ENCODE measurements at regions of chr11 and their contacts with region 1.

Region 1: DNA sequence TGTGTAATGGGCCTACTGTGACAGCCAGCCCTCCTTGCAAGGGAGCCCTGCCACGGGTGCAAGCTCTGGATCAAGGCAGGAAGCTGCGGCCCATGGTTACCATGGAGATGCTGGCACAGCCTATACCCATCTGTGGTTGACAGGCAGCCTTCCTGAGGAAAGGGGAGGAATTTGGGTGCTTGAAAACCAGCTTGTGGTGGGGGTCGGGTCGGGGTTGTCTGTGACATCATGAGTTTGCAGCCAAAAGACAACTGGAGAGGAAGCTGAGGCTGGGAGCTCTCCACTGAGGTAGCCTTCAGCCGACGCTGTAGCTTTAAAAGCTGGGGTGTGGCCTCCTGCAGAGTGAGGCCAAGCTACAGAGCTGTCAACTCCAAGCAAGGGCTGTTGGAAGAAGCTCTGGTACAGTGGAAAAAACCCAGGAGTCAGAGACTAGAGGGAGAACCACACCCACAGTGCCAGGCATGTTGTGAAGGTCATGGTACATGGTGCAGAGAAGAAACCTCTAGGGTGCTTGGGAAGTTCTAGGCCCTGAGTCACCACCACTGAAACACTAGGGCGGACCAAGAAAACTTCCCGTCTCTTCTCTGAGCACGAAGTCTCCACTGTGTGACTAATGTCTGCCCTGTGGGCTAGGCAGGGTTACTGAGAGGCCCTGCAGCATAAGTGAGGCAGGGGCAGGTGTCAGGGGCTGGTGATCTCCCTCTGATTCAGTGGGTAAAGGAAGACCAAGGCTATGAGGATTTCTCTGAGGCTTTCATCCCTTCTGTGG is 10.8 kb upstream of the LDHA start:
- DNase-seq: peak; percentile 53
- H3K4me3 Mint-ChIP-seq: peak overlapping the region; percentile 59
- H3K27ac Mint-ChIP-seq: peak overlapping the region; percentile 99
- H3K4me1 Mint-ChIP-seq: peaks cover 38% of the 10 kb centered on the region
- H3K27me3 Mint-ChIP-seq: no peaks in the 10 kb centered on the region

Region 2: DNA sequence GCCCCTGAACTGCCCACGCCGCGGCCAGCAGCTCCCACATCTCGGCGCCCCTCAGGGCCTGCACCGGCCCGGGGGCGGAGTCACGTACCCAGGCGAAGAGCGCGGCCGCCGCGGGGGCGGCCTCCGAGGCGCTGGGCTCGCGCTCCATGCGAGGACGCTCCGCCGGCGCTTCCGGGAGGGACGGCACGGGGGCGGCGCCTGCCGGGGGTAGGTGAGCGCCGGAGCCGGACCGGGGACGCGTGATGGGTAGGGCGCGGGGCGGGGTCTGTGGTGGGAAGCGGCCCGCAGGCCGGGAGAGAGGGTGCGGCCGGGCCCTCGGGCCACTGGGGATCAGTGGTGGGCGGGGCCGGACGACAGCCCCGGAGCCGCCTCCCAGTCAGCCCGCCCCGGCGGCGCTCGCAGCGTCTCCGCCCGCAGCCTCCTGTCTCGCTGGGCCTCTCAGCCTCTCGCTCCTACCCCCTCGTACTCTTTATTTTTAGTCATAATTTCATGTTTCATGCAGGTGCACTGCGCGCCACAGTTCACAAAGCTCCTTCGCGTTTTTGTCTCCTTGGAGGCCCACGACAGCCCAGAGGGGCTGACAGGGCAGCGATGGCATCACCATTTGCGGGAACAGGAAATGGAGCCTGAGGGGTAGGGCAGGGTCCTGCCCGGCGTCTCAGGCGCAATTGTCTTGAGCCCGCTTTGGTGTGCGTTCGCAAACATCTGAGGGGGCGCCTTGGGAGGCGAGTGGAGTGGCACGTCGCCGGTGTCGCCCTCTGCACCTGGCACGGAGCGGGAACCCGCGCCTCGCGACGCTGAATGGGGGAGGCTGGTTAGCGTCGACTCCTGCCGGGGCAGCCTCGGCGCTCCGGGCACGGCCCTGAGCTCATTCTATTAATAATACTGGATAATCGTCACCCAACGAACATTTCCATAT is 370.4 kb before region 1 on chr11 and contains the start of gene SERGEF:
- intact Hi-C with region 1: loop called (anchors 5 kb)
- DNase-seq: peak; percentile 92
- H3K4me3 Mint-ChIP-seq: peak within 1 kb of the TSS; percentile 97
- H3K27ac Mint-ChIP-seq: peak within 1 kb of the TSS; percentile 98
- H3K4me1 Mint-ChIP-seq: peaks cover 44% of the 10 kb centered on the region
- H3K27me3 Mint-ChIP-seq: peaks cover 5% of the 10 kb centered on the region
- total RNA-seq, gene SERGEF: 24.5 and 32.8 TPM in 2 replicates

Region 3: DNA sequence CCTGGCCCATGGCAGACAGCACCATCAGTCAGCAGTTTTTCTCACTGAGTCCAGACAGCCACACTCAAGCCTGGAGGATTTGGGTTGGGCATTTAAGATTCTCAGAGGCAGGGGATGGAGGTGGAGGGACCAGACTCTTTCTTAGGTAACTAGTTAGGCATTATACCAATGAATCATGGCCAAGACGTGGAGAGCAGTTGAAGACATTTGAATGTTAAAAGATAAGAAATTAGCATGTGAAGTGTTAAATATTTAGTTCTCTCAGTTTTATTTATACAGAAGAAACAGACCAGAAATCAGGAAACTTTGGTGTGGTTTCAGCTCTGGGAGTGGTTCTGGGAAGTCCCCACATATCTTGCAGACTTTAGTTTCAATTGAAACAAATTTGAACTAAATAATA is 51.3 kb before region 1 on chr11:
- intact Hi-C with region 1: loop called (anchors 2 kb)
- DNase-seq: no peak
- H3K4me3 Mint-ChIP-seq: peak overlapping the region; percentile 67
- H3K27ac Mint-ChIP-seq: peak overlapping the region; percentile 88
- H3K4me1 Mint-ChIP-seq: peaks cover 67% of the 10 kb centered on the region
- H3K27me3 Mint-ChIP-seq: no peaks in the 10 kb centered on the region

Region 4: GRCh38 chr11:18471995-18472394 is 88.4 kb after region 1 on chr11:
- intact Hi-C with region 1: loop called (anchors 5 kb)
- DNase-seq: no peak
- H3K4me3 Mint-ChIP-seq: no peak overlapping the region
- H3K27ac Mint-ChIP-seq: no peak overlapping the region
- H3K4me1 Mint-ChIP-seq: no peaks in the 10 kb centered on the region
- H3K27me3 Mint-ChIP-seq: no peaks in the 10 kb centered on the region

Region 5: DNA sequence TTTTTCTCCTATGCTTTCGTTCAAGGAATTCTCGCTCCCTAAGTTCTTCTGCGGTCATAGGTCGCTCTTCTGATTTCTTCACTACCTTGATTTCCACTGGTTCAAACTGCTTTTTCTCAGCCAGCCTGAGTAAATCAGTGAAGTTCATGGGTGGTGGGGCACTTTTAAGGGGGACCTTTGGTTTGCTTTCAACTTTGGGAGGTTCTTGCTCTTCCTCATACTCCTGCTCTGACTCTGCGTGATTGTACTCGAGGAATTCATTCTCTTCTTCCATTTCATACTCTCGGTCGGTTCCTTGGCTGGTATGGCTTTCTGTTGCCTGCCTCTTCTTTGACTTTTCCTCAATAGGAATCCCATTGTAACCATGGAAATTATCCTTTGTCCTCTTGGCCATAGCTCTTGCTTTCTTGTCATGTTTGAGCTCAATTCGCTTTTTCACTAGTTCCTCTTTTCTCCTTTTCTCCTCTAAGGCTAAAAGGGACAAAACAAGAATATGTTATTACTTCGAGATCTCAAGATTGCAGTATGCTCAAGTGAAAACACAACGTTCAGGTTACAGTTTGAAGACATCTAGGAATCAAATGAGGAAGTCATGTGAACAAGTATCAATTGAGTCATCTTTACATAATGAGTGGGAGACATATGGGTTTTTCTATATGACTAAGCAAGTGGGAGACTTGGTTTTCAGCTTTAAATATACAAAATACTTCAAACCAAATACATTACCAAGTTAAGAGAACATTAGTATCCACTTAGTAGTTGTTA is 232.2 kb after region 1 on chr11:
- intact Hi-C with region 1: loop called (anchors 5 kb)
- DNase-seq: no peak
- H3K4me3 Mint-ChIP-seq: peak overlapping the region; percentile 70
- H3K27ac Mint-ChIP-seq: peak overlapping the region; percentile 87
- H3K4me1 Mint-ChIP-seq: peaks cover 67% of the 10 kb centered on the region
- H3K27me3 Mint-ChIP-seq: no peaks in the 10 kb centered on the region